Adrenal gland (tissue), 19 donors: ENCODE measurements at regions of chr2 and their contacts with region 1.

Region 1: GRCh38 chr2:172864182-172864581 is 128.5 kb downstream of the RAPGEF4 start:
- DNase-seq: peak in 6 of 7 donors; percentile 44 to 85 (median 66)
- H3K4me3 ChIP-seq: no peak overlapping the region
- H3K27ac ChIP-seq: no peak overlapping the region
- H3K4me1 ChIP-seq: peaks cover 28 to 62% of the 10 kb centered on the region in 2 donors
- H3K27me3 ChIP-seq: no peaks in the 10 kb centered on the region
- CTCF ChIP-seq: peak; percentile 52 to 77 (median 66)
- POLR2A ChIP-seq: no peak

Region 2: GRCh38 chr2:172813314-172813888 is 50.8 kb before region 1 on chr2:
- intact Hi-C with region 1: loop called in 1 of 2 experiments (anchors 10 kb)
- DNase-seq: peak in 3 of 7 donors; percentile 25 to 43 (median 31)
- H3K4me3 ChIP-seq: no peak overlapping the region
- H3K27ac ChIP-seq: no peak overlapping the region
- H3K4me1 ChIP-seq: peaks cover 0 to 12% of the 10 kb centered on the region in 2 donors
- H3K27me3 ChIP-seq: no peaks in the 10 kb centered on the region
- CTCF ChIP-seq: peak; percentile 25 to 81 (median 65)
- POLR2A ChIP-seq: no peak

Region 3: GRCh38 chr2:172931918-172932520 is 67.8 kb after region 1 on chr2:
- intact Hi-C with region 1: loop called (anchors 5 kb)
- DNase-seq: peak; percentile 66 to 90 (median 80)
- H3K4me3 ChIP-seq: peak overlapping the region in 1 of 4 donors; percentile 21
- H3K27ac ChIP-seq: peak overlapping the region in 3 of 5 donors; percentile 49 to 82 (median 80)
- H3K4me1 ChIP-seq: peaks cover 11 to 60% of the 10 kb centered on the region in 2 donors
- H3K27me3 ChIP-seq: no peaks in the 10 kb centered on the region
- CTCF ChIP-seq: peak; percentile 66 to 76 (median 74)
- POLR2A ChIP-seq: no peak